Dorsolateral prefrontal cortex (tissue), 120 donors: ENCODE measurements at regions of chr6 and their contacts with region 1.

Region 1: GRCh38 chr6:11496152-11497060 is 41.1 kb upstream of the TMEM170B start:
- DNase-seq: peak in 5 of 10 donors; percentile 33 to 67 (median 52)
- H3K4me3 ChIP-seq: peak overlapping the region in 2 of 59 donors; percentile 10 to 19
- H3K27ac ChIP-seq: peak overlapping the region in 13 of 59 donors; percentile 6 to 64 (median 35)
- H3K27me3 ChIP-seq: no peaks in the 10 kb centered on the region
- CTCF ChIP-seq: peak; percentile 86 to 100 (median 98)

Region 2: DNA sequence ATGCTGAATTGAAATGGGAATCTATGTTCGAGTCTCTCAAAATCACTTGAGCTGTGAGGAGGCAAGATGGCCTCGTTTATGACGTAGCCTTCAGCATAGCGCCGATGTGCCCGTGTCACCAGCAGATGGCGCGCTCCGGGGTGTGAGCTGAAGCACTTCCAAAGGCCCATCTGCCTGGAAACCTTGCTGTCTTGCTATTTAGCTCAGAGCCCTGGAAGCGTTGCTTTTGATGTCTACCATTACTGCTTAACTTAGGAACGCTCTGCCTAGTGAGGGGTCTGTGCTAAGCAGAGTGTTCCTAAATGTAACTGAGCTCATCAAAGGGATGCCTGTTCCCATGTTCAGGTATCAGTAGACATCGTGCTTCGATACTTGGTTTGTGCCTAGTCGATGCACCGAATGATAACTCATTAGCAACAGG is 541.8 kb before region 1 on chr6:
- intact Hi-C with region 1: loop called in 1 of 2 experiments (anchors 5 kb)
- DNase-seq: peak in 9 of 10 donors; percentile 37 to 71 (median 51)
- H3K4me3 ChIP-seq: no peak overlapping the region
- H3K27ac ChIP-seq: no peak overlapping the region
- H3K27me3 ChIP-seq: no peaks in the 10 kb centered on the region
- CTCF ChIP-seq: peak in 55 of 56 donors; percentile 36 to 79 (median 65)

Region 3: DNA sequence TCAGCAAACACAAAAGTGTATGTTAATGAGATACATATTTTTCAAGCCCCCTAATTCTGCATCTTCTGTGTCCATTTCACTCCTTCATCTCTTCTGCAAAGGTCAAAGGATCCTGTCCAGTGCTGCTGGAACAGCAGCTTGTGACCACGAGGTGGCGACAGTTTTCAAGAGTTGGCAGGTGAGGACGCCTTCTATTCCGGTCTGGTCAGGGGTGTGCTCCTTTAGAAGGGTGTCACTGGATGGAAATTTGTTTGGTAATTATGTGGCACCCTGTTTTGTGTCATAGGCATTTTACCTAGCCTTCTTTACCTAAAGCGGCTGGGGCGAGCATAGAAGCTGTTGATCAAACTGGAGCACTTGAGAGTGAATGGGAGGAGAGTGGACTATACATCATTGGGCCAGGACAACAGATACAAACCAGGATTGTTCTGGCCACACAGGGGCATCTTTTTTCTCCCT is 352.0 kb before region 1 on chr6:
- intact Hi-C with region 1: loop called (anchors 1 kb)
- DNase-seq: peak; percentile 70 to 84 (median 76)
- H3K4me3 ChIP-seq: peak overlapping the region in 8 of 59 donors; percentile 3 to 47 (median 22)
- H3K27ac ChIP-seq: no peak overlapping the region
- H3K27me3 ChIP-seq: no peaks in the 10 kb centered on the region
- CTCF ChIP-seq: peak; percentile 85 to 99 (median 95)

Region 4: DNA sequence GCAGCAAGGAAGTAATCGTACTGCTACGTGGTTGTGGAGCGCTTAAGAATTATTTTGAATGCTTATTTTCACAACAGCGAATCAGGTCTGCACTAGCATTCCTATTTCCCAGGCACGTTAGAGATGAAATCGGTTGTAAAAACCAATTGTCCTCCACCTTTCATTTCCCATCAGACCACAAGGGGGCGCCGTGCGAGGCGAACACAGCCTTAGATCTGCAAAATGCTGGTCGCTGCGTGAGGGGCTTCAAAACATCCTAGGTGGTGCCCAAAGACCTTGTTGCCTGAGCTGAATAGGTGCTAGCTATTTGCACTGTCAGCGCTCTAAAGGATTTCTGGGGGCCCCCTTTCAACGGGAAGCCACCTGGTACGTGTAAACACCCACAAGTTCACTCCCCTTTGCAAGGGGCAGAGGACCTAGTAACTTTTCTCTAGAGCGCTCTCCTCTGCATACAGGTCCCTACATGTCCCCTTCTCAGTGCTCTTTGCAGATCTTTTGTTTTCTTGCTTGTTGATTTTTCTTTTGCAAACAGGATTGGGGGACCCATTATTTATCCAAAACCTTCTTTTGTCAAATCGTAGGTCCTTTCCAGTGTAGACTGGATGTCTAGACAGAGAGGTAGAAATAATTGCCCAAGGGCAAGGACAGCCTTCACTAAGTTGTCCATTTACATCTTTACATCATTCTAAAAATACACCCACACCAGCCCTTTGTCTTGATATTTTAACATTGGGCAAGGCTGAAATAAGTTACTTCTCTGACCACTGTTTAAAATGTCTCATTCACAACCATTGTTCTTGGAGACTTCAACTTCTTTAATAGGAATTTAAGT is 323.7 kb before region 1 on chr6:
- intact Hi-C with region 1: loop called in 1 of 2 experiments (anchors 10 kb)
- DNase-seq: peak in 8 of 10 donors; percentile 45 to 73 (median 62)
- H3K4me3 ChIP-seq: peak overlapping the region in 10 of 59 donors; percentile 11 to 49 (median 30)
- H3K27ac ChIP-seq: no peak overlapping the region
- H3K27me3 ChIP-seq: no peaks in the 10 kb centered on the region
- CTCF ChIP-seq: peak; percentile 64 to 92 (median 84)

Region 5: GRCh38 chr6:11232193-11232769 is 264.1 kb before region 1 on chr6 and contains the start of gene NEDD9:
- intact Hi-C with region 1: loop called in 1 of 2 experiments (anchors 10 kb)
- DNase-seq: peak; percentile 74 to 97 (median 93)
- H3K4me3 ChIP-seq: peak within 1 kb of the TSS; percentile 41 to 91 (median 69)
- H3K27ac ChIP-seq: peak within 1 kb of the TSS in 57 of 59 donors; percentile 13 to 92 (median 74)
- H3K27me3 ChIP-seq: no peaks in the 10 kb centered on the region
- CTCF ChIP-seq: peak in 26 of 56 donors; percentile 4 to 40 (median 22)
- total RNA-seq, gene NEDD9: 7.7 to 36.0 (median 17.1) TPM

Region 6: GRCh38 chr6:11241793-11242201 is 254.6 kb before region 1 on chr6:
- intact Hi-C with region 1: loop called (anchors 5 to 10 kb)
- DNase-seq: peak in 8 of 10 donors; percentile 32 to 69 (median 50)
- H3K4me3 ChIP-seq: no peak overlapping the region
- H3K27ac ChIP-seq: no peak overlapping the region
- H3K27me3 ChIP-seq: no peaks in the 10 kb centered on the region
- CTCF ChIP-seq: peak in 55 of 56 donors; percentile 5 to 78 (median 58)

Region 7: GRCh38 chr6:11575408-11576033 is 79.1 kb after region 1 on chr6:
- intact Hi-C with region 1: loop called in 1 of 2 experiments (anchors 5 kb)
- DNase-seq: peak in 7 of 10 donors; percentile 34 to 66 (median 51)
- H3K4me3 ChIP-seq: peak overlapping the region in 2 of 59 donors; percentile 12 to 14
- H3K27ac ChIP-seq: peak overlapping the region in 1 of 59 donors; percentile 37
- H3K27me3 ChIP-seq: no peaks in the 10 kb centered on the region
- CTCF ChIP-seq: peak; percentile 53 to 92 (median 84)